ENCODE measurements at regions of chr10 and their contacts with region 1.

Region 1: DNA sequence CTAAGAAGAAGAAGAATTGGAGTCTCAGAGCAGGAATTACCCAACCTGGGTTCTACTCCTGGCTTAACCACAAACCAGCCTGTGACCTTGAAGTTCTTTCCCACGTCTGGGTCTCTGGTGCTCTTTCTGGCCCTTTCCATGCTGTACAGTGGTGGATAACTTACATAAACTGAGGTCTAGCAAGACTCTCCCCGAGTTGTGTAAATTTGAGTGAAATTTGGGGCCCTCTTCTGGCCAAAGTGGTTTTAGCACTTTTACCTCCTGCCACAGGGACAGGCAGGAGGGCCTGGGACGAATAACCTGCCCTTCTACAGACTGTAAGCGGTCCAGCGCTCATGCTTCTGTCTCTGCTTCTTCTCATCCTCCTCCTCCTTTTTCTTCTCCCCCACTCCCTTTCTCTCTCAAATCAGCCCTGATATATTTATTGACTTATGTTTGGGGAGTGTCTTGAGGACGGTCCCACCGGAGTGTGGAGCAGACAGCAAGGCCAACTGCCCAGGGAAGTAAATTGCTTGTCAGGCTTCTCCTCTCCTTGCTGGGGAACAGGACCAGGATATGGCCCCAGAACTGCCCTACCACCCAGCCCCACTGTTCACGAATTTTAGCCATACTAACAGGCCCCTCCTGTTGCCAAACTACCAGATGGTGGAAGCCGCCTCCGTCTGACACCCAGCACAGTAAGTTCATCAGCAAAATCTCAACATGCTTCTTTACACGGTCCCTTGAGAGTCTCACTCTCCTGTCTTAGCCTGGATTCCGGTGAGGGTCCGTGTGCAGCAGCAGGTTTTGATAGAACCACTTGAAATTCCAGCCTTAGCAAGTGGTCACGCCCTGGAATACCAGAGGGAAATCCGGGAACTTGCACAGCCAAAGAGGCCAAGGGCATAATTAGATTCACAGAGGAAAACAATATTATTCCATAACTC is 4.0 kb upstream of the SH3PXD2A start:
- DNase-seq: peak; percentile 57
- ATAC-seq: peak; percentile 78
- H3K4me3 ChIP-seq: no peak overlapping the region
- H3K27ac ChIP-seq: no peak overlapping the region
- H3K4me1 ChIP-seq: peaks cover 2% of the 10 kb centered on the region
- H3K27me3 ChIP-seq: no peaks in the 10 kb centered on the region
- CTCF ChIP-seq: peak; percentile 90

Region 2: GRCh38 chr10:103712570-103713498 is 146.6 kb before region 1 on chr10:
- CTCF ChIA-PET with region 1: interaction called, 8 read pairs
- POLR2A ChIA-PET with region 1: no interaction called
- in situ Hi-C with region 1: no loop called
- intact Hi-C with region 1: loop called (anchors 1 kb)
- DNase-seq: peak; percentile 67
- ATAC-seq: peak; percentile 84
- H3K4me3 ChIP-seq: no peak overlapping the region
- H3K27ac ChIP-seq: no peak overlapping the region
- H3K4me1 ChIP-seq: peaks cover 4% of the 10 kb centered on the region; the same call in 1 of the 2 replicates
- H3K27me3 ChIP-seq: no peaks in the 10 kb centered on the region
- CTCF ChIP-seq: peak; percentile 91

Region 3: DNA sequence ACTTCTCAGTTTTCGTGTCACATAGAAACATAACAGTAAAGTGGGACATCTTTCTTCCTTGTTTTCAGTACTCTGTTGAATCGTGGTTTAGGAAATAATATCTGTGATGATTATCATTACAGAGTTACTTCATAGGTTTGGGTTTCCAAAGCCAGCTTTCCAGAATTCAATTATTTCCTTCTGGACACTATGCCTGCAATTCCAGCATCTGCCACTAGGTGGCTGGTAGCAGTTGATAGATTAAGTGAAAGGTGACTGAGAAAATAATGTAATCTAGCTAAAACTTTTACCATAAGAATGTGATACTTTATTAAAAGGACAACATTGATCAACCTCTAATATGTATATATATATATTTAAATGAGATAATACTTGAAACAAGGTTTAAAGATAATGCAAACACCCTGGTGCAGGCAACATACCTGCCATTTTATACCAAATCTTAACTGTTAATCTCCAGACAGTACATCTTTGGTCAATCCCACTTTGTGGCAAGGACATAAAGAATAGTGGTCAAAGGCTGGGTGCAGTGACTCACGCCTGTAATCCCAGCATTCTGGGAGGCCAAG is 106.7 kb before region 1 on chr10:
- CTCF ChIA-PET with region 1: interaction called, 11 read pairs
- POLR2A ChIA-PET with region 1: no interaction called
- in situ Hi-C with region 1: no loop called
- intact Hi-C with region 1: no loop called
- DNase-seq: no peak
- ATAC-seq: no peak
- H3K4me3 ChIP-seq: no peak overlapping the region
- H3K27ac ChIP-seq: no peak overlapping the region
- H3K4me1 ChIP-seq: peaks cover 12% of the 10 kb centered on the region
- H3K27me3 ChIP-seq: no peaks in the 10 kb centered on the region
- CTCF ChIP-seq: peak; percentile 87

Region 4: DNA sequence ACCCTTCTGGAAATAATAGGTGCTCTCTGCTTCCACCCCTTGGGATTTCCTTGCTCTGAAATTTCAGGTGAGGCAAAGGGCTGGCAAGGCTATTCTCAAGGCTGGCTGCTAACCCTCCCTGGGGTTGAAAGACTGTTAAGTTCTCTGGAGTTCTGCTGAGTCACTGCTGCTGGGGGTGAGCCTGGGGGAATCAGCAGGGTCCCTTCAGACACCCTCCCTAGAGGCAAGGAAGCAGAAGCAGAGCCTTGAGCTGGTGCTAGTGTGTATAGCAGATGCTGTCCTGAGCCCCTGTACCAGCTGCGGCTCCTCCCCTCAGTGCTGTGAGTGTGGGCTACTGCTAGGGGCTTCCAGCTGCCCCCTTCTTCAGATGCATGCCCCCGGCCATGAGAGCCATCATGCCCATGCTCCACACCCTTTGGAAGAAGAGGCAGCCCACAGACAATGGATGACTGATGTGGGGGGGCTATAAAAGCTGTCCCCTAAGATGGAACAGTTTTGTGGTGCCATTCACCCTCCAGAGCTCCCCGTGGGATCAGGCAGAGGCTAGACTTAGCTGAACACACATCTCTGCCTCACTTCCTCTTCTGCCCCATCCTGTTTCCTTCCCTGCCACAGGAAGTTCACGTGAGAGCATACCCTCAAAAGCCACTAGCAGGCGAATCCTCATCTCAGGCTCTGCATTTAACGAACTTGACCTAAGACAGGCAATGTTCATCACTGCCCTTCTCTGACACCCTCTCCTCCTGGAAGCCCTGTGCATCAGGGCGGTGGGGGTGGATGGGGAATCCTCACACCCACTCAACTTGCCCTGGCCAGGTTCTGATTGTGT is 95.8 kb before region 1 on chr10:
- CTCF ChIA-PET with region 1: interaction called, 4 read pairs
- POLR2A ChIA-PET with region 1: no interaction called
- in situ Hi-C with region 1: no loop called
- intact Hi-C with region 1: loop called (anchors 10 kb)
- DNase-seq: no peak
- ATAC-seq: no peak
- H3K4me3 ChIP-seq: no peak overlapping the region
- H3K27ac ChIP-seq: peak overlapping the region; percentile 14; the same call in 1 of the 2 replicates
- H3K4me1 ChIP-seq: peaks cover 27% of the 10 kb centered on the region
- H3K27me3 ChIP-seq: no peaks in the 10 kb centered on the region
- CTCF ChIP-seq: no peak

Measured in Panc1 (cell line).